WTC11 (cell line): ENCODE measurements at regions of chr10 and their contacts with region 1.

Region 1: DNA sequence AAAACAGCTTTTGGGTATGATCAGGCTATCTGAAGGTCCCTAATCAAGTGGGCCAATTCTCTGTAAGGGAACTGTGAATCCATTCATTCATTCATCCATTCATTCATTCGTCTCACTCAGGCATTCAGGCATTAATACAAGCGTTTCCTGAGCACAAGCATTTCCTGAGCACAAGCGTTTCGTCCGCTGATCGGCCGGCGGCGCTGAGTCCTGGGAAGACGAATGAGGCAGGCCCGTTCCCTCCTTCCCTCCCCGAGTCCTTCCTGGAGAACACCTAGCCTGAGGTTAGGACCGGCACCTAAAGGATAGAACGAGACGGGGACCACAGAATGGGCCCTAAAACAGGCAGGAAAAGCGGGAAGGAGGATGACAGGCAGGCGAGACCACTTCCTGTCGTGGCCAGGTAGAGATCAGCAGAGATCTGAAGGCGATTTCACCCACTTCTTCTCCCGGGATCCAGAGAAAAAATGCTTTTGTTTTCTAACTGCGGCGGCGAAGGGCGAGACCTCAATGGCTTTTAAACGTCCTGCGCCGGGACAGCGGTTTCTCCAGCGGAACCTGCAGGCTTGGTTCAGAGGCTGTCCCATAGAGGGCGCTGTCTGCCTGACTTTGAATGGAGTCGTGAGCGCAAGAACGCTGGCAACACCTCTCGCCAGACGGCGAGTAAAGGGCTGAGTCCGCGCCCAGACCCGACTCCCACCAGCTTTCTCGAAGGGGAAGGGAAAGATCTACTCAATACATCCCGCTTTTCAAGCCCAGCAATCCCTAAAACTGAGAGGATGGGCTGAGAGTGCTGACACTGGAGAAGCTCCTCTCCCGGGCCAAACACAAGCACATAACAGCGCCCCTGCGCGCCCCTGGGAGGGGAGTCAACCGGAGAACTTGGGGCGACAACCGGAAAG is 2.9 kb upstream of the HMX3 start:
- DNase-seq: peak; percentile 96
- ATAC-seq: peak; percentile 54
- H3K4me3 Mint-ChIP-seq: peak overlapping the region; percentile 75
- H3K27ac Mint-ChIP-seq: no peak overlapping the region
- H3K4me1 Mint-ChIP-seq: peaks cover 24% of the 10 kb centered on the region
- H3K27me3 Mint-ChIP-seq: peaks cover 95% of the 10 kb centered on the region
- CTCF ChIP-seq: peak; percentile 90

Region 2: GRCh38 chr10:123117644-123118417 is 15.0 kb before region 1 on chr10:
- CTCF ChIA-PET with region 1: interaction called, 12 read pairs
- POLR2A ChIA-PET with region 1: no interaction called
- DNase-seq: peak; percentile 80
- ATAC-seq: peak; percentile 97
- H3K4me3 Mint-ChIP-seq: peak overlapping the region; percentile 55
- H3K27ac Mint-ChIP-seq: no peak overlapping the region
- H3K4me1 Mint-ChIP-seq: peaks cover 19% of the 10 kb centered on the region
- H3K27me3 Mint-ChIP-seq: peaks cover 34% of the 10 kb centered on the region
- CTCF ChIP-seq: no peak

Region 3: GRCh38 chr10:123147635-123148413 is 15.0 kb after region 1 on chr10 and contains the start of gene HMX2:
- CTCF ChIA-PET with region 1: interaction called, 36 read pairs
- POLR2A ChIA-PET with region 1: interaction called, 4 read pairs
- DNase-seq: peak; percentile 83
- ATAC-seq: peak; percentile 27
- H3K4me3 Mint-ChIP-seq: peak within 1 kb of the TSS; percentile 62
- H3K27ac Mint-ChIP-seq: no peak within 1 kb of the TSS
- H3K4me1 Mint-ChIP-seq: peaks cover 72% of the 10 kb centered on the region
- H3K27me3 Mint-ChIP-seq: peaks cover 94% of the 10 kb centered on the region
- CTCF ChIP-seq: no peak
- total RNA-seq, gene HMX2: 0.59 to 1.7 TPM (median 1.4 TPM) in 3 replicates

Region 4: GRCh38 chr10:123154092-123154921 is 21.5 kb after region 1 on chr10 and contains the start of gene BUB3:
- CTCF ChIA-PET with region 1: interaction called, 36 read pairs
- POLR2A ChIA-PET with region 1: interaction called, 6 read pairs
- DNase-seq: peak; percentile 97
- ATAC-seq: peak; percentile 88
- H3K4me3 Mint-ChIP-seq: peak within 1 kb of the TSS; percentile 99
- H3K27ac Mint-ChIP-seq: peak within 1 kb of the TSS; percentile 99
- H3K4me1 Mint-ChIP-seq: peaks cover 75% of the 10 kb centered on the region
- H3K27me3 Mint-ChIP-seq: peaks cover 31% of the 10 kb centered on the region
- CTCF ChIP-seq: no peak
- total RNA-seq, gene BUB3: 180 to 192 TPM (median 186 TPM) in 3 replicates

Region 5: DNA sequence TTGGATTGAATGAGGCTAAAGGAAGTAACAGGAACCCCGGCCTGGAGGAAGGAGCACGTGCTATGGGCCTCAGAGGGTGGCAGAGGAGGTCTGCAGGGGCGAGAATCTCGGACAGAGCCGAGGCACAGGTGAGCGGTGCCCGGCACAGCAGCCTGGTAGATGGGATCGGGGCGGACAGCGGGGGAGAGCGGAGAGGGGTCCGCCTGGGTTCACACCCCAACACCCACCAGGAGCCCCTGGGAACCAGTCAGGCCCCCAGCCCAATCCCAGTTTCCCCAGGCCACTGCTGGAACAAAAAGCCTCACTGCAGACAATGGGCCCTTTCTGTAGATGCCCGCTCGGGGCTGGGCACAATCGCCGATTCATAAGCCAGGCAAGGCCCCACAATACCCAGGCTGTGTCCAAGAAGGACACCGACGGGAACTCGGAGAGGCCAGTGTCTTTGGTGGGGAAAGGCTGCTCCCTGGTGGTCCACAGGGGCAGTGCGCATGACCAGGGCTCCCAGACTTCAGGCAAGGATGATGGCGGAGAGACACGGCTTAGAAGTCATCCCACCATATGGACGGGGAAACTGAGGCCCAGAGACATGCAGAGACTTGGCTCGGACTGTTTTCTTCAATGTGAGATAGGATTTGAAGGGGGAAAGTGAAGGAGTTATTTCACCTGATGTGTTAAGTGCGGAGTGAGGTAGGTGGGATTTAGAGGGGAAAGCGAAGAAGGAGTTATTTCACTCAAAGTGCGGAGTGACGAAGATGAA is 426.4 kb after region 1 on chr10:
- CTCF ChIA-PET with region 1: interaction called, 11 read pairs
- POLR2A ChIA-PET with region 1: no interaction called
- DNase-seq: peak; percentile 86
- ATAC-seq: peak; percentile 84
- H3K4me3 Mint-ChIP-seq: no peak overlapping the region
- H3K27ac Mint-ChIP-seq: no peak overlapping the region
- H3K4me1 Mint-ChIP-seq: peaks cover 11% of the 10 kb centered on the region
- H3K27me3 Mint-ChIP-seq: peaks cover 3% of the 10 kb centered on the region; the same call in 1 of the 2 replicates
- CTCF ChIP-seq: peak; percentile 99